Pancreas (tissue), 10 donors: ENCODE measurements at regions of chr10 and their contacts with region 1.

Region 1: DNA sequence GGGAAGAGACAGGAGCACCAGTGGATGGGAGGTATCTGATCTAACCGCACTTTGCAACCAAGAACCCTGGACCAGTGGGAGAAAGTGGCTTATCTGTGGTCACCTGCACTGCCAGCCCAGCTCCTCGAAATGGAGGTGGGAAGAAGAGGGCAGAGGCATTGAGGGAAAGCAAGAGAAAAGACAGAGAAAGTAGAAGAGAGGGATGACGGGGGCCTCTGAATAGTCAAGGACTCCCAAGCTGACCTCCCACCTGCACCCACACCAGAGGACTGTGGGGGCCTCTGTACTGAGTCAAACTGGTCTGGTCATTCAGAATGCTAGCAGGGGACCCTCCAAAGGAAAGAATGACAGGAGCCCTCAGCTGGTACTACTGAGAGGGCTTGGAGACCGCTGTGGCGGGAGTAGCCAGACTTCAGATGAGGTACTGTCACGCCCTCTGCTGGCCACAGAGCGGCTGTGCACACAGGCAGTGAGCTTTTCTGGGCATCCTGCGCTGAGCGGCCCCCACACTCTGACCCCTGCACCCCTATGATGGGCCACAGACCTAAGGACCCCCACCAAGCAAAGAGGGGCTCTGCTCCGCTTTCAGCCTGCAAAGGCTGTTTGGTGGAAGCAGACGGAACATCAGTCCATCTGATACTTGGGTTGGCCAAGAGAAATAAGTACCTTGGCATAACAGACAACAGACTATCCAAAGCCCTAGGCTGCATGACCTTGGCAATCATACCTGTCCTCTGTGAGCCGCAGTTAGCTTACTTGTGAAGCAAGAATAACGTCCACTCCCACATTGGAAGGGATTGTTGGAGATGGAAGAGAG is 112.9 kb downstream of the COL13A1 start:
- DNase-seq: peak in 5 of 6 donors; percentile 23 to 85 (median 65)
- ATAC-seq: peak; percentile 67 to 92 (median 84)
- H3K4me3 ChIP-seq: no peak overlapping the region
- H3K27ac ChIP-seq: no peak overlapping the region
- H3K4me1 ChIP-seq: no peaks in the 10 kb centered on the region
- H3K27me3 ChIP-seq: no peaks in the 10 kb centered on the region
- CTCF ChIP-seq: peak; percentile 89 to 96 (median 93)

Region 2: DNA sequence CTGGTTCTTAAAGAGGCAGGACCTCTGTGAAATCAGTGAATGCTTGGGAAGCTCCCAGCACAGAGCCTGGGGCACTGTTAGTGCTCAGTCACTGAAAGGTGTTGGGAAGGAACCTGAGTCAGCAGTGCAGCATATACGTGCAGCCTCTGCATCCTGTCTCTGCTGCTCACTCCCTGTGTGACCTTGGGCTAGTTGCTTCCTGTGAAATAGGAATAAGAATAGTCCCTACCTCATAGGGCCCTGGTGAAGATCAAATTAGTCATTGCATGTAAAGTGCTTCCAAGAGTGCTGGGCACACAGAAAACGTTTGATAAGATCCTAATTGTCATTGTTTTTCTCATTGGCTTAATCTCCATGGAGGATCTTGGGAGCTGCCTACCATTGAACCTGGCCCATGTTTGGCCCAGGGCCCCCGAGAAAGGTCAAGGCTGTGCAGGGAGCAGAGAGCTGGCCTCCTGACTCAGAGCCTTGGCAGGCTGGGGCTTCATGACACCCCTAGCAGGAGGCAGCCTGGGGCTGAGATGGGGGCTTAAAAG is 186.2 kb before region 1 on chr10:
- intact Hi-C with region 1: loop called in 1 of 3 experiments (anchors 5 kb)
- DNase-seq: no peak
- ATAC-seq: peak in 1 of 4 donors; percentile 35
- H3K4me3 ChIP-seq: no peak overlapping the region
- H3K27ac ChIP-seq: peak overlapping the region in 1 of 4 donors; percentile 28
- H3K4me1 ChIP-seq: no peaks in the 10 kb centered on the region
- H3K27me3 ChIP-seq: no peaks in the 10 kb centered on the region
- CTCF ChIP-seq: no peak

Region 3: DNA sequence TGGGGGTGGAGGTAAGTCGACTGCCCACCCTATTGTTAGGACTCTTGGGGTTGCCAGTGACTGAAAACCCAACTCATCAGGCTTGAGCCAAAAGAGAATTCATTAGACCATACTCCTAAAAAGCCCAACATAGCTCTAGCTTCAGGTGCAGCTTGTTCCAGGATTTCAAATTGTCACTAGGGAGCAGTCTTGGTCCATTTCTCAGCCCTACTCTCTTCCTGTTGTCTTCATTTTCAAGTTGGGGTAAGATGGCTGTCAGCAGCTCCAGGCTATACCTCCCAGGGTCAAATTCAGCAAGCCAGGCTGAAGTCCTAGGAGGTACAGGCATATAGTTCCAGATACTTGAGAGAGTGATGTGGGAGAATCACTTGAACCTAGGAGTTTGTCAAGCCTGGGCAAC is 127.8 kb before region 1 on chr10:
- intact Hi-C with region 1: loop called in 1 of 3 experiments (anchors 10 kb)
- DNase-seq: no peak
- ATAC-seq: peak in 1 of 4 donors; percentile 41
- H3K4me3 ChIP-seq: no peak overlapping the region
- H3K27ac ChIP-seq: no peak overlapping the region
- H3K4me1 ChIP-seq: no peaks in the 10 kb centered on the region
- H3K27me3 ChIP-seq: no peaks in the 10 kb centered on the region
- CTCF ChIP-seq: no peak